Sigmoid colon (tissue), 7 donors: ENCODE measurements at regions of chr22 and their contacts with region 1.

Region 1: DNA sequence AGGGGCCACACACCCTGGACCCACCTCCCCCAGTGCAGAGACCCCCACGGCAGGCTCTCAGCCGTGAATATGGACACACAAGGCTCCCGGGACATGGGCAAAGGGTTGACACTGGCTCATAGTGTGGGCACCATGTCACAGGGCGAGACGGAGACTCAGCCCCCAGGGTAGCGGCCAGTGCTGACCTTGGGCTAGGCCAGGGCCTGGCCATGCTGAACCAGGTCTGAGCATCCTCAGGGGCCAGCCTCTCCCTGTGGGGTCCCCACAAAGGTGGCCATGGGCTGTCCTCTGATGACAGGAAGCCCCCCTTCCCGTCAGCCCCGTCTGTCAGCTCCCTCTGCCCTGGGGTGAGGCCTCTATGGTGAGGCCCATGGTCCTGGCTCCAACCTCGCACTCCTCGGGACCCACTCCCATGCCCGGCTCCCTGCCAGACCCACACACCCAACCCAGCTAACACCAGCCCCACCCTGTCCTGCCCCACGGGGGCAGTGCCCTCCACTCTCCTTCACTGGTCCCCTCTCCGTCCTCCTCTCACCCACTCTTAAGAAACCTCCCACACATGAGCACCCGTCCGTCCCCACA is 19.0 kb upstream of the PRODH start:
- DNase-seq: peak; percentile 55
- H3K4me3 ChIP-seq: no peak overlapping the region
- H3K27ac ChIP-seq: no peak overlapping the region
- H3K4me1 ChIP-seq: no peaks in the 10 kb centered on the region
- H3K27me3 ChIP-seq: peaks cover 0 to 12% (median 6%) of the 10 kb centered on the region in 3 donors
- CTCF ChIP-seq: no peak
- EP300 ChIP-seq: no peak
- POLR2A ChIP-seq: no peak

Region 2: GRCh38 chr22:19022755-19023154 is 67.7 kb after region 1 on chr22:
- intact Hi-C with region 1: no loop called
- DNase-seq: no peak
- H3K4me3 ChIP-seq: no peak overlapping the region
- H3K27ac ChIP-seq: no peak overlapping the region
- H3K4me1 ChIP-seq: no peaks in the 10 kb centered on the region
- H3K27me3 ChIP-seq: peaks cover 0 to 28% (median 0%) of the 10 kb centered on the region in 3 donors
- CTCF ChIP-seq: no peak
- EP300 ChIP-seq: no peak
- POLR2A ChIP-seq: no peak

Region 3: DNA sequence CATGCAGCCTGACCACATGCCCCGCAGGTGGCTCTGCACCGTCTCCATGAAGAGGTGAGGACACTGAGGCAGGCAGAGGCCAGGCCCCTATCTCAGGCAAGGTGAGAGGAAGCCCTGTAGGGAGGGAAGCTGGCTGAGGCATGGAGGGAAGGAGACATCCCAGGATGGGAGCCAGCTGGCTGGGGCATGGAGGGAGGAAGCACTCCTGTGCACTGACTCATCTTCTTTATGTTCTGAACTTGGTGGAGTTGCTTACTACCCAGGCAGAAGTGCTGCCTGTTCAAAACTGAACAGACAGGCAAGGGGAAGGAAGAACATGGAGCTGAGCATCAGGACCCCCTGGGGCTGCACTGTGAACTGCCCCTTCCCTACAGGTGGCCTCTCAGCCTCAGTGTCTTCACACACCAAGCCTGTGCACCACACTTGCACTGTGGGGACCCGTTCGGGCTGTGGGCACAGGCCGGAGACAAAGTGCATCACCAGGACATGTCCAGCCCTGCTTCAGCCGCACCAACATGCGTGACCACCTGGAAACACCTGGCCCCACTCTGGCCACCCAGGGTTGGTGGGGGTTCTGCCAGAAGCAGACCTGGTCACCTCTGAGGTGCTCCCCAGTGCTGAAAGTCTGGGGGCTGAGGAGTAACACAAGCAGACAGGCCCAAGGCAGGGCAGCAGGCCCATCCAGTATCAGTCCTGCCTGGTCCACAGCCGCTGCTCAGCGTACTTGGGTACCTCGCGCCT is 111.6 kb after region 1 on chr22:
- intact Hi-C with region 1: no loop called
- DNase-seq: peak; percentile 61
- H3K4me3 ChIP-seq: no peak overlapping the region
- H3K27ac ChIP-seq: no peak overlapping the region
- H3K4me1 ChIP-seq: peaks cover 0 to 8% (median 2%) of the 10 kb centered on the region in 4 donors
- H3K27me3 ChIP-seq: no peaks in the 10 kb centered on the region
- CTCF ChIP-seq: no peak
- EP300 ChIP-seq: no peak
- POLR2A ChIP-seq: no peak

Region 4: DNA sequence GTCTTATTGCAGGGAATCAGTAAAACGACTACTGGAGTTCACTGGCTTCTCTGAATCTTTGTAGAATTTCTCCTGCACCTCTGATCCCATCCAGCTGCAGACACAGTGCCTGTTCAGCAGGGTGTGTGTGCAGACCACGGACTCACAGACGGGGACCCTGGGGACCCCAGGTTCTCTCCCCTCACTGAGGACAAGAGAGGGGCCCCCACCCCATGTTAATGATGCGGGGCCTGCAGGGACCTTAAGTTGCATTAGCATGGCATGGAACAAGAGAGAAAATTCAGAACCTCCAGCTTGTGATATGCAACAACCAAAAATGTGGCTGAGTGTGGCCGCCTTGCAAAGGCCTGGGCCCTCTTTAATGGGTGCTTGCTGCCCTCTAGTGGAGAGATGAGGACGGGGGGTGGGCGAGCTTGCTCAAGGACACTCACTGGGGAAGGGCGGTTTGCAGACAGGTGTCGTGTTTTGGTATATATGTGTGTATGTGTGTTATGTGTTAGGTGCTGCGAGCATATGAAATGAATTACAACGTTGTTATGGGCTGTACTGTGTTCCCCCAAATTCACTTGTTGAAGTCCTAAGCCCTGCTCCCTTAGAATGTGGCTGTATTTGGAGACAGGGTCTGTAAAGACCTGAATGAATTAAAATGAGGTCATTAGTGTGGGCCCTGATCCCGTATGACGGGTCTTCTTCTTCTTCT is 674.8 kb after region 1 on chr22:
- intact Hi-C with region 1: loop called (anchors 1 kb)
- DNase-seq: peak; percentile 83
- H3K4me3 ChIP-seq: no peak overlapping the region
- H3K27ac ChIP-seq: no peak overlapping the region
- H3K4me1 ChIP-seq: no peaks in the 10 kb centered on the region
- H3K27me3 ChIP-seq: peaks cover 0 to 46% (median 4%) of the 10 kb centered on the region in 3 donors
- CTCF ChIP-seq: peak; percentile 62 to 79 (median 74)
- EP300 ChIP-seq: no peak
- POLR2A ChIP-seq: no peak